ENCODE measurements at regions of chr22 and their contacts with region 1.

Region 1: GRCh38 chr22:37623075-37624016 is 14.7 kb downstream of the GGA1 start:
- DNase-seq: peak; percentile 88
- ATAC-seq: peak; percentile 83
- H3K4me3 Mint-ChIP-seq: no peak overlapping the region
- H3K27ac Mint-ChIP-seq: peak overlapping the region; percentile 89
- H3K4me1 Mint-ChIP-seq: peaks cover 43% of the 10 kb centered on the region
- H3K27me3 Mint-ChIP-seq: no peaks in the 10 kb centered on the region

Region 2: DNA sequence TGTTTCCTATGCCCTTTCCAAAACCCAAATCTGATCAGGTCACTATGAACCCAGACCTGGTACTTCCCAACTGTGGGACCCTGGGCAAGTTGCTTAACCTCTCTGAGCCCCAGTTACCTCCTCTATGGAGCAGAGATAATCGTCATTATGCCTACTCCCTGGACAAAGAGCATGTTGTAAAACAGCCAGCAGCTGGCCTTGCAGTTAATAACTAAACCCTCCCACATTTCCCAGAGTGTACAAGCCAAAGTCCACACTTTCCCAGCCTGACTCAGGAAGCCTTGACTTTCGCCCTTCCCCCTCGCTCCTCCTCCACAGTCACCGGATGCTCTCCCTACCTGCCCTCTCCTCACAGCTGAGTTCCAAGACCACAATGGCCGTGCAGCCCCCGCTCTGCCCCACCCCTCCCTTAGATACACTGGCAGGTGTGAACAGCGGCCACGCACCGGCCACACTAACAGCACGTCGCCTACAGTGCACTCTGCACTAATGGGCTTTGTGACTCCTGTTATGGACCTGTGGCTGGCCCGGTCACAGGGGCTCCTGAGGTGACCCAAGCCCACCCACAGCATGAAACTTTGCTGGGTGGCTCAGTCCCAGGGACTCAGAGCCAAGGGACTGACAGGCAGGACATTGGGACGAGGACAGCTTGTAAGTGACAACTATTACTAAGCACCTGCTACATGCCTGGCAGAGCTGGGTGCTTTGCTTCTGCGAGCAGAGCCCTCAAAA is 121.6 kb before region 1 on chr22:
- CTCF ChIA-PET with region 1: no interaction called
- POLR2A ChIA-PET with region 1: no interaction called
- intact Hi-C with region 1: no loop called
- DNase-seq: no peak
- ATAC-seq: no peak
- H3K4me3 Mint-ChIP-seq: no peak overlapping the region
- H3K27ac Mint-ChIP-seq: no peak overlapping the region
- H3K4me1 Mint-ChIP-seq: peaks cover 12% of the 10 kb centered on the region
- H3K27me3 Mint-ChIP-seq: no peaks in the 10 kb centered on the region

Region 3: DNA sequence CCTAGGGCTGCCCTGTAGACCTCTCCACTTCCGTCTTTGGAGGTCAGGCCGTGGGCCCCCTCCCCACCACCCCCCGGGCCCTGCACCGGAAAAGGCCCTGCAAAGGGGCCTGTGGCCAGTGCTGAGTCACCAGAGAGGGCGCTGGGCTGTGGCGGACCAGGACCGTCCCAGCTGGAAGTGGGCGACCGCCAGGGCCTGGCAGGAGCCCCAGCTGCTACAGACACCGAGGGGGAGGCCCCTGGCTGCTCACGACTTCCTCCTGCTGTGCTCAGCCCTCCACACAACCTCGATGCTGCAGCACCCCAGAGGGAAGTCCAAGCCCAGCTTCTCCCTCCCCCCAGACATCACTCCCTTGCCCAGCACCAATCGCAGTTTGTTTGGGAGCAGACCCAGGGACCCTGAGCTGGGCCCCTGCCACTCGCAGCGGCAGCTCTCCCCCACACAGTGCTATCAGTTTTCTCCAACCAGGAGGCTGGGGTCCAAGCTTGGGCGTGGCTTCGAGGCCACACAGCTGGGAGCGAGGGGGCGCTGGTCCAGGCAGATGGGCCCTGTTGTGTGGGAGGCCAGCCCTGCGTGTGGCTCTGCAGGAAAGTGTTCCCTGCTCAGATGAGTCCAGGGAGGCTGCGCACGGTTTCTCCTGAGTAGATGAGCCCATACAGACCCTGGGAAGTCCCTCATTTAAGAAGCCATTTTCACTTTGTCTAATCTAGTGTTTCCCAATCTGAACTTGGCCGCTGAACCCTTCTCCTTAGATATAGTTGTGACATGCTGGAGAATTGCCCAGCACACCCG is 10.5 kb after region 1 on chr22:
- CTCF ChIA-PET with region 1: interaction called, 23 read pairs
- POLR2A ChIA-PET with region 1: interaction called, 8 read pairs
- intact Hi-C with region 1: no loop called
- DNase-seq: peak; percentile 86
- ATAC-seq: peak; percentile 70
- H3K4me3 Mint-ChIP-seq: peak overlapping the region; percentile 58
- H3K27ac Mint-ChIP-seq: peak overlapping the region; percentile 93
- H3K4me1 Mint-ChIP-seq: peaks cover 56% of the 10 kb centered on the region
- H3K27me3 Mint-ChIP-seq: no peaks in the 10 kb centered on the region